ENCODE measurements at regions of chr17 and their contacts with region 1.

Region 1: GRCh38 chr17:78865682-78866390 is 25.2 kb upstream of the USP36 start:
- DNase-seq: peak; percentile 73
- ATAC-seq: peak; percentile 65
- H3K4me3 ChIP-seq: no peak overlapping the region
- H3K27ac ChIP-seq: no peak overlapping the region
- H3K4me1 ChIP-seq: peaks cover 20 to 32% of the 10 kb centered on the region in 2 experiments
- H3K27me3 ChIP-seq: no peaks in the 10 kb centered on the region
- CTCF ChIP-seq: peak; percentile 90 to 99 (median 98)
- POLR2A ChIP-seq: no peak
- RAD21 ChIP-seq: peak; percentile 95

Region 2: GRCh38 chr17:78852709-78853121 is 13.1 kb before region 1 on chr17:
- CTCF ChIA-PET with region 1: interaction called, 18 read pairs
- POLR2A ChIA-PET with region 1: interaction called, 3 read pairs
- RAD21 ChIA-PET with region 1: no interaction called
- intact Hi-C with region 1: no loop called
- DNase-seq: no peak
- ATAC-seq: peak; percentile 74
- H3K4me3 ChIP-seq: no peak overlapping the region
- H3K27ac ChIP-seq: no peak overlapping the region
- H3K4me1 ChIP-seq: no peaks in the 10 kb centered on the region
- H3K27me3 ChIP-seq: no peaks in the 10 kb centered on the region
- CTCF ChIP-seq: peak in 2 of 3 experiments; percentile 47 to 49; a peak in 4 of 6 replicates
- POLR2A ChIP-seq: no peak
- RAD21 ChIP-seq: peak; percentile 39; the same call in 1 of the 2 replicates

Region 3: GRCh38 chr17:78879635-78880186 is 13.9 kb after region 1 on chr17:
- CTCF ChIA-PET with region 1: interaction called, 55 read pairs
- POLR2A ChIA-PET with region 1: no interaction called
- RAD21 ChIA-PET with region 1: interaction called in 1 of 2 experiments, 6 read pairs
- intact Hi-C with region 1: no loop called
- DNase-seq: no peak
- ATAC-seq: no peak
- H3K4me3 ChIP-seq: no peak overlapping the region
- H3K27ac ChIP-seq: no peak overlapping the region; the same call in 1 of the 2 replicates
- H3K4me1 ChIP-seq: peaks cover 40 to 81% of the 10 kb centered on the region in 2 experiments
- H3K27me3 ChIP-seq: no peaks in the 10 kb centered on the region
- CTCF ChIP-seq: no peak
- POLR2A ChIP-seq: no peak
- RAD21 ChIP-seq: no peak

Region 4: DNA sequence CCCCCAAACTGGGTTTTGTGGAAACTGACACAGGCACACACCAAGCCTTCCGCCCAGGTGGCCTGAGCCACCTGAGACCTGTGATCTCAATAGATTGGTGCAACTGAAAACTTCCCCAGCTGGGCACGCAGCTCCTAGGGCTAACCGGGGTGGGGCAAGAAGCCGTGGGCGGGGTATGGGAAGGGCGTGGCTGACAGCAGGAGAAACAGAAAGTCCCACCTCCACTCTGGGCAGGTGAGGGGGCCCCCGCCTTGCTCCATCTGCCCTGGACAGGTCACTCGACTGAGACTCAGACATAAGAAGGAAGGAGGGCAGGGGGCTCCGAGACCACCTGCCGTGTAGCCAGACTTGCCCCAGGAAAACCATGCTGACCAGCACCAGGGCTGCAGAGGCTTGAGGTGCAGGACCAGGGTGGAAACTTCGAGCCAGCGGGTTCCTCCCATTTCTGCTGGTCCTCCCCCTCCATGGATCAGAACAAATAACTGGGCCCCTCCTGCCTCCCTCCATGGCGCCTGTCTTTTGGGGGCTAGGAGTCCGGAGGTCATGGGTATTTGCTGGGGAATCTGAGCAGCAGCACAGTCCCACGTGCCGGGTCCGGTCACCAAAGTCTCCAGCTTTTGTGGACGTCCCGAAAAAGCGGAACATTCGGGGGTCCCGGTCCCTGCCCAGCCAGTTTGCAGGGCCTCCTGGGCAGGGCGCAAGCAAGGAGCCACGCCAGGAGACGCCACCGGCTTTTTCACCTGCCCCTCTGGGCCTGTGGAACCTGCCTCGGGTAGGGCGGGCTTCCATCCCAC is 58.0 kb after region 1 on chr17:
- CTCF ChIA-PET with region 1: interaction called, 8 read pairs
- POLR2A ChIA-PET with region 1: no interaction called
- RAD21 ChIA-PET with region 1: no interaction called
- intact Hi-C with region 1: loop called (anchors 5 kb)
- DNase-seq: peak; percentile 69
- ATAC-seq: peak; percentile 85
- H3K4me3 ChIP-seq: peak overlapping the region; percentile 71 to 76
- H3K27ac ChIP-seq: peak overlapping the region; percentile 32; the same call in 1 of the 2 replicates
- H3K4me1 ChIP-seq: peaks cover 15 to 43% of the 10 kb centered on the region in 2 experiments
- H3K27me3 ChIP-seq: no peaks in the 10 kb centered on the region
- CTCF ChIP-seq: no peak
- POLR2A ChIP-seq: no peak
- RAD21 ChIP-seq: no peak

Region 5: GRCh38 chr17:78962345-78962983 is 96.6 kb after region 1 on chr17:
- CTCF ChIA-PET with region 1: interaction called, 13 read pairs
- POLR2A ChIA-PET with region 1: interaction called, 3 read pairs
- RAD21 ChIA-PET with region 1: no interaction called
- intact Hi-C with region 1: no loop called
- DNase-seq: peak; percentile 81
- ATAC-seq: peak; percentile 90
- H3K4me3 ChIP-seq: peak overlapping the region in 1 of 2 experiments; percentile 4; a peak in 1 of 4 replicates
- H3K27ac ChIP-seq: no peak overlapping the region
- H3K4me1 ChIP-seq: peaks cover 19 to 53% of the 10 kb centered on the region in 2 experiments
- H3K27me3 ChIP-seq: no peaks in the 10 kb centered on the region
- CTCF ChIP-seq: no peak
- POLR2A ChIP-seq: no peak
- RAD21 ChIP-seq: no peak

Region 6: GRCh38 chr17:78970834-78971773 is 105.3 kb after region 1 on chr17:
- CTCF ChIA-PET with region 1: interaction called, 39 read pairs
- POLR2A ChIA-PET with region 1: interaction called, 3 read pairs
- RAD21 ChIA-PET with region 1: interaction called in 1 of 2 experiments, 14 read pairs
- intact Hi-C with region 1: loop called (anchors 1 kb)
- DNase-seq: peak; percentile 65
- ATAC-seq: peak; percentile 69
- H3K4me3 ChIP-seq: no peak overlapping the region
- H3K27ac ChIP-seq: peak overlapping the region; percentile 13
- H3K4me1 ChIP-seq: peaks cover 8 to 28% of the 10 kb centered on the region in 2 experiments; a peak in 3 of 4 replicates
- H3K27me3 ChIP-seq: no peaks in the 10 kb centered on the region
- CTCF ChIP-seq: peak; percentile 92 to 99 (median 94)
- POLR2A ChIP-seq: no peak
- RAD21 ChIP-seq: peak; percentile 98